ENCODE measurements at regions of chr6 and their contacts with region 1.

Region 1: DNA sequence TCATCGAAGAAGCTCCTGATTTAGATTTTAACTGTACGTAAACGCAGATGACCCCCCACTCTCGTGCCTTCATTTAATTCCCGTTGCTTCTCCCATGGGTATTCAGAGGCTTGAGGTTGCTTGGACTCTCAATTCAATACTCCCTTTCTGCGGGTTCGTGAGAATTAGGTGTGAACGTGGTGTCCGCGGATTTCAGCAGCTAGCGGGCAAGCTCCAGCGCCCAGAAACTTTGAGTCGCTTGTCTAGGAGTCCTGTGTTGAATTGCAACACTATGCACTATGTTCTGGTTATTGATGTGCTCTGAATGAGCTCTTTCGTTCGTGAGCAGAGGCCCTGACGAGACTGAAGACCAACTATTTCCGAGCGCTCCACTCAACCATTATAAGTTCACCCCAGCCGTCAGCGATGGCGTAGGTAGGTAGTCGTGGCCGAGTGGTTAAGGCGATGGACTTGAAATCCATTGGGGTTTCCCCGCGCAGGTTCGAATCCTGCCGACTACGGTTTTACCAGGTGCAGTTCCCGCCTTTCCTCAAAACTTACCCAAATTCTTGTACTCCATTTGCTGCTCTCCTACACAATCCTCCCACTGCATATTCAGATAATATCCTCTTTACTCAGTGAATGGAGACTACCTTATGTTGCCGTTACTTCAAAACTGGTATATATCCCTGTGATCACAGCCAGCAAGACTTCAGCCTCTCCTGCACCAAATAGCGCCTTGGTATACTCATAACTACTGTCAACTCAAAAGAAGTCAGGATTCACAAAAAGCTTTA is 72.6 kb upstream of the ZNF184 start:
- DNase-seq: peak; percentile 74
- ATAC-seq: peak; percentile 76
- H3K4me3 Mint-ChIP-seq: peak overlapping the region; percentile 71
- H3K27ac Mint-ChIP-seq: no peak overlapping the region
- H3K4me1 Mint-ChIP-seq: peaks cover 15% of the 10 kb centered on the region
- H3K27me3 Mint-ChIP-seq: peaks cover 82% of the 10 kb centered on the region
- CTCF ChIP-seq: no peak

Region 2: DNA sequence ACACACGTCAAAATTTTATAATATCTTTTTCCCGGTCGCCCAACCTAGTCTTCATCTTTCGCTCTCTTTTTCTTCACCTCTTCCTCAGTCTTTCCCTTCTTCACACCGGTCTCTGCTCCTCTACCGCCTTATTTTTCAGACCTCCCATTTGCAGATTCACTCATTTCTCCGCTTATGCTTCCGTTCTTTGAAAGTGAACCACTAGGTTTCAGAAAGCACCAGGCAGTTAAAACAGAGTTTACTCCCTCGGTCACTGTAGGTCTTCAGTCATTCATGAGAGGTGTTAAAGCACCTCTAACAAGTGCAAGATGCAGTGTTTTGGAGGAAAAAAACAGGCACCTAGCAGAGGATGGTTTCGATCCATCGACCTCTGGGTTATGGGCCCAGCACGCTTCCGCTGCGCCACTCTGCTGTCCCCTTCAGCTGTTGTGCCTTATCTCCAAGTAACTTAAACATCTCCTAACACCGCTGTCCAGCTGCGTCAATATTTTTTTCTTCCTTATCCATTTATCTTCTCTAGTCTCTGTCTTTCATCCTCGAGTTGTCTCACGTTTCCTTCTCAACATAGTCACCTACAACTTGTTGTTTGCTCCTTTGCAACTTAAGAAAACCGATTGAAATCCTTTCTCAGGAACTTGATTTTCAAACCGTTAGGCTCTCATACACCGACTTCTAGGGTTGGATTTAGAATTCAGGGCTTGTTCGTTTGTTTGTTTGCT is 47.2 kb after region 1 on chr6:
- CTCF ChIA-PET with region 1: no interaction called
- POLR2A ChIA-PET with region 1: no interaction called
- intact Hi-C with region 1: loop called (anchors 5 kb)
- DNase-seq: peak; percentile 71
- ATAC-seq: peak; percentile 89
- H3K4me3 Mint-ChIP-seq: no peak overlapping the region
- H3K27ac Mint-ChIP-seq: no peak overlapping the region
- H3K4me1 Mint-ChIP-seq: no peaks in the 10 kb centered on the region
- H3K27me3 Mint-ChIP-seq: peaks cover 31% of the 10 kb centered on the region
- CTCF ChIP-seq: no peak

Region 3: GRCh38 chr6:27604986-27605385 is 59.5 kb after region 1 on chr6:
- CTCF ChIA-PET with region 1: no interaction called
- POLR2A ChIA-PET with region 1: no interaction called
- intact Hi-C with region 1: no loop called
- DNase-seq: no peak
- ATAC-seq: no peak
- H3K4me3 Mint-ChIP-seq: peak overlapping the region; percentile 66
- H3K27ac Mint-ChIP-seq: no peak overlapping the region
- H3K4me1 Mint-ChIP-seq: peaks cover 27% of the 10 kb centered on the region
- H3K27me3 Mint-ChIP-seq: peaks cover 53% of the 10 kb centered on the region
- CTCF ChIP-seq: no peak